Spleen (tissue), 13 donors: ENCODE measurements at regions of chr17 and their contacts with region 1.

Region 1: GRCh38 chr17:40726919-40727318 is 23.4 kb upstream of the KRT24 start:
- DNase-seq: no peak
- H3K4me3 ChIP-seq: no peak overlapping the region
- H3K27ac ChIP-seq: no peak overlapping the region
- H3K4me1 ChIP-seq: peaks cover 0 to 9% (median 0%) of the 10 kb centered on the region in 6 donors
- H3K27me3 ChIP-seq: peaks cover 0 to 9% (median 0%) of the 10 kb centered on the region in 7 donors
- CTCF ChIP-seq: peak in 6 of 11 experiments; percentile 13 to 43 (median 27)
- POLR2A ChIP-seq: no peak

Region 2: GRCh38 chr17:40647624-40648383 is 79.1 kb before region 1 on chr17 and contains the start of gene SMARCE1:
- intact Hi-C with region 1: loop called (anchors 10 kb)
- DNase-seq: peak; percentile 93
- H3K4me3 ChIP-seq: peak within 1 kb of the TSS; percentile 71 to 96 (median 88)
- H3K27ac ChIP-seq: peak within 1 kb of the TSS; percentile 97 to 99 (median 98)
- H3K4me1 ChIP-seq: peaks cover 26 to 63% (median 50%) of the 10 kb centered on the region in 6 donors
- H3K27me3 ChIP-seq: no peaks in the 10 kb centered on the region
- CTCF ChIP-seq: no peak
- POLR2A ChIP-seq: peak in 1 of 3 donors; percentile 23
- total RNA-seq, gene SMARCE1: 76.3 to 126 (median 102) TPM